Common myeloid progenitor, CD34-positive (primary cell): ENCODE measurements at regions of chr3 and their contacts with region 1.

Region 1: DNA sequence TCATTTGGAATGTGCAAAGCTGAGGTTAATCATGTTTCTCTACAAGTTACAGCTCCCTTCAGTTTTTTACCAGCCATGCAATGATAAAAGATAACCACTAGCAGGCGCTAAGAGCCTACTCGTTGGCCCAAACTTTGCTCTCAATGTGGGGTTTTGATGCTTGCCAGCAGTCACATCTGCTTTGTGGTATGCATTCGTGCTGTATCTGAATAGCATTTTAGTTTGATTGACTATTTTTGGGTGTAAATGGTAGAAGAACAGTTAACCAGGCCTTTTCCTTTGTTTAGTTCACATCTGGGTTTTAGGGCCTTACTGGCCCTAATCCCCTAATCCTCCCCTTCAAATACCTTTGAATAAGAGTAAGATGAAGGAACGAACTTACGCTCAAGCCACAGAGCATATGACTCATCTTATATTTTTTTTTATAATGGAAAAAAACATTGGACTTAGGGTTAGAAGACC is 4.4 kb upstream of the CLDN11 start:
- DNase-seq: peak; percentile 63 to 80 (median 77)
- H3K4me3 ChIP-seq: no peak overlapping the region
- H3K27ac ChIP-seq: no peak overlapping the region
- H3K4me1 ChIP-seq: peaks cover 0 to 12% (median 10%) of the 10 kb centered on the region in 4 experiments
- H3K27me3 ChIP-seq: peaks cover 0 to 32% (median 17%) of the 10 kb centered on the region in 5 experiments

Region 2: GRCh38 chr3:170189398-170190256 is 224.6 kb before region 1 on chr3:
- CTCF ChIA-PET with region 1: no interaction called
- POLR2A ChIA-PET with region 1: no interaction called
- DNase-seq: no peak
- H3K4me3 ChIP-seq: peak overlapping the region in 1 of 7 experiments; percentile 39
- H3K27ac ChIP-seq: no peak overlapping the region
- H3K4me1 ChIP-seq: no peaks in the 10 kb centered on the region
- H3K27me3 ChIP-seq: no peaks in the 10 kb centered on the region

Region 3: DNA sequence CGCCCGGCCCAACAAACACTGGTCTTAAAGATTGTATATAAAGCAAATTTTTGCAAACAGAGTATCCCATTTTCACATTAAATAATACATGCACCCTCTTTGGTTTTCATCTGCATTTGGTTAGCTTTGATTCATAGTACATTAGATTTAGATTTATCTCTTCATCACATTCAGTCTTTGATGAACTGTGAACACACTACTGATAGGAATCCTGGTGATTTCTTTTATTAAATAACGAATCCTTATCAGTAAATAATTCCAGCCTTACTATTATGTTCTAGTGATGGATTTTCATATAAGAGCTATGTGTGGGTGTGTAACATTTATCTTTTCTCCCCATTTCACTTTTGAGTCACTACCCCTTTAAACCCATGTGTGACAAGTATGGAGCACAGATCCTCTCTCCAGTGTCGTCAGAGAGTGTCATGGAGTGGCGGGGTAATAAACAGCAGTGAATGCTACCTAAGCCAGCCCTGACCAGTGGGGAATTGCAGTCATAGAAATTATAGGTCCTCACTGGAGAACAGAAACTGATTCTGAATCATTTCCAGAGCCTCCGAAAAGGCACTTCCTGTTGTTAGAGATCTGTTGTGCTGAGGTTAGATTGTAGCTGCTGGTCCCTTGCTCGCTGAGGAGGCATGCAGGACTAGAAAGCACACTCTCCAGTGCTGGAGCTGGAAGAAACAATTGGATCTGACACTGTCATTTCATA is 149.6 kb after region 1 on chr3:
- CTCF ChIA-PET with region 1: no interaction called
- POLR2A ChIA-PET with region 1: no interaction called
- DNase-seq: no peak
- H3K4me3 ChIP-seq: no peak overlapping the region
- H3K27ac ChIP-seq: no peak overlapping the region
- H3K4me1 ChIP-seq: no peaks in the 10 kb centered on the region
- H3K27me3 ChIP-seq: peaks cover 0 to 3% (median 0%) of the 10 kb centered on the region in 5 experiments

Region 4: DNA sequence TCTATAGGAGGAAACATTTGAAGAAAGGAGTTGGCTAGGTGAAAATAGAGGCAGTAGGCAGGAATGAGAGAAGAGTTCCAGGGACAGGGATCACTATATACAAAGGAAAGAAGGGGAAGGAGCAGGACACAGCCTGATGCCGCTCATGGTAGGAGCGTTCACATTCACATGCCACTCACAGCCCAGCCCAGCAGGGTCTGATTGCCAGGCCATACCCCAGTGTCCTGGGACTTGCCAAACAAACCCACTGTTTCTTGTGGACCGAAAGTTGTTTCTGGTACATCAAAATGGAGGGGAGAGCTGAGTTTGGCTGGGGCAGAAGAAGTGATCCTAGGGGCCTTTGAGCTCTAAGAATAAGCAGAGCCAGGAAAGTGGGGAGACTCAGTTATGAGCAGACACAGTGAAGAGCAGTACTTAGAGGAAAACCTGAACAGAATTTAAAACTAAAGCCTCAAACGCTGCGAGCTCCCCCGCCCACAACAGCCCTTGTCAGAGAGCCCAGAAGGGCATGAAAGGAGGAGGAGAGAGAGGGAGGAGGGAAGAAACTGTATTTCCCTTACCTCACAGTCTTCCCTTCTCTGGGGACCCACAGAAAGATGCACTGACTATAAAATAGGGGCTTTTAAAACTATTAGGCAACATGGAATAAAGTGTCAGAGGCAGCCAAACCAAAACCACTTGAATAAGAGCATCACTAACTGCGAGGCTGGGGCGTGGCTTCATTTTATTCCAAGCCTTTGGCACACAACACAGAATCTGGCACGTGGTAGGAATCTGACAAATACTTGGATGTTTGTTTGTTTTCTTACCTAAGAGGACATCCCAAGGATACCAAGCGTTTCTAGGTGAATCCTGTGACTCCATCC is 326.7 kb after region 1 on chr3:
- CTCF ChIA-PET with region 1: no interaction called
- POLR2A ChIA-PET with region 1: no interaction called
- DNase-seq: no peak
- H3K4me3 ChIP-seq: no peak overlapping the region
- H3K27ac ChIP-seq: no peak overlapping the region
- H3K4me1 ChIP-seq: no peaks in the 10 kb centered on the region
- H3K27me3 ChIP-seq: peaks cover 0 to 5% (median 0%) of the 10 kb centered on the region in 5 experiments

Region 5: DNA sequence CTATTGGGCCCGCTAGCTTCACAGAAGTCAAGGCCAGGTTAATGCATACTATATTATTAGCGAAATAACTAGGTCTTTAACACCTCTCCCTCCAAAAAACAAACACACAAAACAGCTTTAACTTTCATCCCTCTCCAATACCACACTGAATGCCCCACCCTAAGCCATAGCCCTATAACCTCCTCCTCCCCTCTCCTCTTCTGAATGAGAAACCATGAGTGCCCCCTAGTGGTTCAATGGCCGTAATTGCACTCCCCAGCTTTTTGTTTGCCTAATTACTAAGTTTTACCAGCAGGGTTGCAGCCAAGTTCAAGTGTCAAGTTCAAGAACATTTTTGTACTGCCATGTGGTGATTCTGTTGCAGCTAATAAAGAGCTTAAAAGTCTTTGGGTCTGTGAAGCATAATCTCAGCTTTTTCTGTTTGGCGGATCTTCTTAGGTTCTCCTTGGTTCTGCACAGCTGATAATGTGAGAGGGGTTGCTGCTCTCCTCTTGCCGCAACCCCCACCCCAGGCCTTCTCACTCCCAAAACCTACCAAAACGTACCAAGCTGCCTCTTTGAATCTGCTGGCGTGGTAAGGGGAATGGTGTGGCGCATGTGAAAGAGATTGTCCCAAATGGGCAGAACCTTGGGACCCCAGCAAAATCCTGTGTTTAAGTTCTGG is 397.8 kb after region 1 on chr3:
- CTCF ChIA-PET with region 1: interaction called, 87 read pairs
- POLR2A ChIA-PET with region 1: no interaction called
- DNase-seq: peak; percentile 77 to 89 (median 83)
- H3K4me3 ChIP-seq: no peak overlapping the region
- H3K27ac ChIP-seq: no peak overlapping the region
- H3K4me1 ChIP-seq: no peaks in the 10 kb centered on the region
- H3K27me3 ChIP-seq: no peaks in the 10 kb centered on the region